ENCODE measurements at regions of chr6 and their contacts with region 1.

Region 1: DNA sequence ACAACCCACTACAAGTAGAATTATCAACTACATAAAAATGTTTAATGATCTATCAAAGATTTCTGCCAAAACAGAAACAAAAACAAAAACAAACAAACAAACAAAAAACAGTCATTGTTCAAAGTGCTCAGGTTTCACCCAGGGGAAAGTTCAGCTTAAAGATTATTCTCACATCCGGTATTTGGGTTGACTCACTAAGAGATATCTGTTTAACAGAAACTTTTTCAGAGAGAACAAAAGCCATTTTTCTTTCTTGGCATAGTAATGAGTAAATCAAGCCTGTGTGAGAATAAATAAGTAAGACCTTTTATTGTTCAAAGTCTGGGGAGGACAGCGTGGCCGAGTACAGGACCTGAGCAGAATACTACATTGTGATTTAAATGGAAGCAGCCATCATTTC is 143.6 kb downstream of the RCAN2 start:
- DNase-seq: no peak
- H3K4me3 ChIP-seq: no peak overlapping the region
- H3K27ac ChIP-seq: no peak overlapping the region
- H3K4me1 ChIP-seq: no peaks in the 10 kb centered on the region
- H3K27me3 ChIP-seq: no peaks in the 10 kb centered on the region
- CTCF ChIP-seq: no peak
- POLR2A ChIP-seq: no peak

Region 2: GRCh38 chr6:46390153-46390876 is 42.6 kb after region 1 on chr6:
- intact Hi-C with region 1: loop called (anchors 5 kb)
- DNase-seq: no peak
- H3K4me3 ChIP-seq: no peak overlapping the region
- H3K27ac ChIP-seq: no peak overlapping the region
- H3K4me1 ChIP-seq: no peaks in the 10 kb centered on the region
- H3K27me3 ChIP-seq: no peaks in the 10 kb centered on the region
- CTCF ChIP-seq: no peak
- POLR2A ChIP-seq: no peak

Region 3: DNA sequence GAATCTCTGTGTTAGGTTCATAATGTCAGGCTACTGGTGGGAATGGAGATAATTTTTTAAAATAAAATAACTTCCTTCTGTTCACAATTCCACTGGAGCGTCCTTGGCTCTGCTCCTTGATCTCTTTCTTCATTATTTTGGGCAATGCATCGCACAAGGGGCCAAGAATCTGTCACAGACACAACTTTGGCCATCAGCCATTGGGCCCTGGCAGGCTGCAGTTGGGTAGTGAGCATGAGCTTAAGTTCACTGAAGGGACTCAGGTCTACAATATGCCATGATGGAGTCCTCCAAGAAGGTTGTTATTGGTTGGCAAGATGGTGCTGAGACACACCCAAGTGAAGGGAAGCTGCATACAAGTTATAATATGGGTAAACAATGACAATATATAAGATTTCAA is 265.0 kb after region 1 on chr6:
- intact Hi-C with region 1: no loop called
- DNase-seq: no peak
- H3K4me3 ChIP-seq: no peak overlapping the region
- H3K27ac ChIP-seq: no peak overlapping the region
- H3K4me1 ChIP-seq: no peaks in the 10 kb centered on the region
- H3K27me3 ChIP-seq: no peaks in the 10 kb centered on the region
- CTCF ChIP-seq: no peak
- POLR2A ChIP-seq: no peak

Region 4: GRCh38 chr6:47655719-47656595 is 1308.3 kb after region 1 on chr6:
- intact Hi-C with region 1: no loop called
- DNase-seq: peak in 1 of 2 donors; percentile 22
- H3K4me3 ChIP-seq: no peak overlapping the region
- H3K27ac ChIP-seq: no peak overlapping the region
- H3K4me1 ChIP-seq: no peaks in the 10 kb centered on the region
- H3K27me3 ChIP-seq: no peaks in the 10 kb centered on the region
- CTCF ChIP-seq: no peak
- POLR2A ChIP-seq: no peak